Activated naive CD4-positive, alpha-beta T cell treated with anti-CD3 and anti-CD28 coated beads, Interleukin-2, amount 10 ng/mL, durations not matched to agents 7 days and 5 days (primary cell): ENCODE measurements at regions of chr14 and their contacts with region 1.

Region 1: DNA sequence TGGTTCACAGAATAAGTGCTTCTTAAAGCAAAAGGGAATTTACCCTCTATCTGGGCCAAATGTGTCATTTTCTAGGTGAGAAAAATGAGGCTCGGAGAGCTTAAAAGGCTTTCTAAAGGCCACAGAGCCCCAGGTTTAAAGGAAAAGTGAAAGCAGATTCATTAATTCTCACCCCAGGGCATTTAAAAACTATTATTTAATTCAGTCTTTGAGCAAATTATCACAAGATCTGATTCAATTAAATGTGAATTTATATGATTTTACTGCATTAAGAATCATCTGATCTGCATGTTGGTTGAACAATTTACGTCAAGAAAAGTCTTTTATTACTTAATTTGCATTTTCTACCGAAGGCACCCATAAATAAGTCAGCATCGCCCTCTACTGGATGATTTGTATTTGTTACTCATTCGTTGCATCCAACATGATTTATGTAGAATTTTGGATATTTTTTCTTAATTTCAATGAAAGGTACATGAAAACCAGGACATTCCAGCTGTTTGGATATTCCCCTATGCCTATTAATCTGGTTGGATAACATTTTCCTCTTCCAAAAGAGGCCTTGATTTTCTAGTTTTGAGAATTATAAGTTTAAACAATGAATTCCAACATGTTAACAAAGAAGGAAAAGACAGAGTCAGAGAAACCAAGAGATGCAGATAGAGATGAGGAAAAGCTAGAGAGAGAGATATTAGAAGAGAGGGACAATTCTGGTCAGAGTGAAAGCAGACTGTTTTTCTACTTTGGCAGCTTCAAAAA is 19.1 kb upstream of the DHRS7 start:
- DNase-seq: peak; percentile 37
- H3K4me3 Mint-ChIP-seq: peak overlapping the region; percentile 67
- H3K27ac Mint-ChIP-seq: peak overlapping the region; percentile 70
- H3K4me1 Mint-ChIP-seq: peaks cover 14% of the 10 kb centered on the region
- H3K27me3 Mint-ChIP-seq: no peaks in the 10 kb centered on the region

Region 2: DNA sequence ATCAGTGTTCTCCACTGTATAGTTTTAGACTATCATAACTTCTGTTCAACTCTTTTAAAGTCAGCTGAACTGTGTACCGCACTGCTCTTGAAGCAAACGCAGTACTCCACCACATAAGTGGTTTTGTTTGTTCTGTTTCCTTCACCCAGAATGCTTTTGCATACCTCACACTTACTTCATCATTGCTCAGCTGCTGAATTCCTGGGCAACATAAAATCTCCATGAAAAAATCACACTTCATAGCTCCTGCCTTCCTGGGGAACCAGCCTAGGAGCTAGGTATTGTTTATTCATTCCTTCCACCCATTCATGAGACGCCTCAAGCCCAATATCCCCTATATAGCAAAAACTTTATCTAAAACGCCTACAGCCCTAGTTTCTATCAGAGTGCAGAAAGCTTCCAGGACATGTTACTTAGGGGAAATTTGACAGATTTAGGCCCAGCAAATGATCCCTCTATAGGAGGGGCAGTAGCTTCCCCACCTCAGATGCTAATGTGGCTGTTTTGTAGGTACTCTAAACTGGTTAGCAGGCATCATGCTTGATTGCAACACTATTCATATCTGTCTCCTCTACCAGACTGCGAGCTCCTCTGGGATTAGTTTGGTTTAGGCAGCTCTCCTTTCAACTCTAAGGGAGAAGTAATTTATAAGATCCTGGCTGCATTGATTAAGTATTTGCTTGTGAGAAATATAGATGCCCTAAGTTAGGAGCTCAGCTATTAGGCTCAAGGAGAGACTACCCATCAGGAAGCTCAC is 219.9 kb before region 1 on chr14:
- CTCF ChIA-PET with region 1: interaction called, 124 read pairs
- DNase-seq: no peak
- H3K4me3 Mint-ChIP-seq: no peak overlapping the region
- H3K27ac Mint-ChIP-seq: no peak overlapping the region
- H3K4me1 Mint-ChIP-seq: peaks cover 10% of the 10 kb centered on the region
- H3K27me3 Mint-ChIP-seq: no peaks in the 10 kb centered on the region

Region 3: DNA sequence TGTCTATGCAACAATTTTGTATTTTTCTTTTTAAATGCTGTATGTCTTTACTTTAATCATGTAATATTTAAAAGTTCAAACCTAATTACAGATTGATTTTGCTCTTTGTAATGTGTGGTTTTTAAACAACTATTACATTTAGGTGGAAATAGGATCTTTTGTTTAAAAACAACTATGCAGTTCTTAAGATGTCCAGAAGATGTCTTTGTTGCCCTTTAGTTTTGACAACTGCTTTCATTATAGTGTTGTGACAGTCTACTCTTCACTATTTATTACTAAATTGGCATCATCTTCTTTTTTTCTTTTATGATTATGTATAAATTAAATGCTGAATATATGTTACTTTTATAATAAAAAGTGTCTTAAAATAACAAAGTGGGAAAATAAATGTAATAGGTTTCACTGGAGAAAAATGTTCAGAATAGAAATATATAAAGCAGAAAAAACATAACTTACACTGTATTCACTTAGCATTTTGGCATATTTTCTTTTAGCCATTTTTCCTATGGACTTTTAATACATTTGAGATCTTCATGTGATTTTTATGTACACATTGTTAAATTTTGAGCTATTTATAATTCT is 119.7 kb before region 1 on chr14:
- CTCF ChIA-PET with region 1: interaction called, 52 read pairs
- DNase-seq: no peak
- H3K4me3 Mint-ChIP-seq: no peak overlapping the region
- H3K27ac Mint-ChIP-seq: no peak overlapping the region
- H3K4me1 Mint-ChIP-seq: no peaks in the 10 kb centered on the region
- H3K27me3 Mint-ChIP-seq: no peaks in the 10 kb centered on the region

Region 4: DNA sequence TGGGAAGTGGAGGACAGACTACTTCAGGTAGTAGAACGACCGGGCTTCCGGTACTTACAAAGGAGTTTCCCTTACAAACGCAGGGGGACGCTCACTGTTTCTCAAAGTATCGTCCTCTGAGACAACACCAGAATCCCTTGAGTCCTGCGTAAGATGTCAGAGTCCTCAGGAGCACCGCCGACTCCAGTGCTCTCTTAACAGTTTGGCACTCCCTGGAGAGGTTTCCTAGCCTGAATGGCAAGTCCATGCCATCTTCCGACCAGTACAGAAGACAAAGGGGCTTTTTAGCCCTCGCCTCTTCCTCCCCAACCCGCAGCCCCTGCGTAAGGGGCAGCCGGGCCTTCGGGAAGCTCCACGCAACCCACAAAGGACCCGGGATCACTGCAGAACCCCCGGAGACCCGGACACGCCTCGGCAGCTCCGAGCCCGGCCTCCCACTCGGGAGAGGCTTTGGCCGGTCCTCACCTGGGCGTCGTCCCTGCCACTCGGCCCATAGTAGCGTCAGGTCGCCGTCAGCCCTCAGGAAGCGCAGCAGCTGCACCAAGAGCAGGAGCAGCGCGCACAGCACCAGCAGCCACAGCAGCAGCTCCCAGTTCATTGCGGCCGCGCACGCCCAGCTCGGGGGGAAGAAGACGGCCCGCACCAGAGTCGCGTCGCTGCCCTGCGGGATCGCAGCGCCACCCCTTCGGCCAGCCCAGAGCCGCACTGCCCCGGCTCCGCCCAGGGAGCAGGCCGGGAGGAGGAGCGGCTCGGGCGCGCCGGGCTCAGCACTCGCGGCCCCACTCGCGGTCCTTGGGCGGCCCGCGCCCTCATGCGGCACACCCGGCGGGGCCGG is 19.4 kb before region 1 on chr14 and contains the start of gene DHRS7:
- CTCF ChIA-PET with region 1: interaction called, 19 read pairs
- DNase-seq: peak; percentile 67
- H3K4me3 Mint-ChIP-seq: peak within 1 kb of the TSS; percentile 95
- H3K27ac Mint-ChIP-seq: peak within 1 kb of the TSS; percentile 95
- H3K4me1 Mint-ChIP-seq: peaks cover 29% of the 10 kb centered on the region
- H3K27me3 Mint-ChIP-seq: peaks cover 5% of the 10 kb centered on the region

Region 5: DNA sequence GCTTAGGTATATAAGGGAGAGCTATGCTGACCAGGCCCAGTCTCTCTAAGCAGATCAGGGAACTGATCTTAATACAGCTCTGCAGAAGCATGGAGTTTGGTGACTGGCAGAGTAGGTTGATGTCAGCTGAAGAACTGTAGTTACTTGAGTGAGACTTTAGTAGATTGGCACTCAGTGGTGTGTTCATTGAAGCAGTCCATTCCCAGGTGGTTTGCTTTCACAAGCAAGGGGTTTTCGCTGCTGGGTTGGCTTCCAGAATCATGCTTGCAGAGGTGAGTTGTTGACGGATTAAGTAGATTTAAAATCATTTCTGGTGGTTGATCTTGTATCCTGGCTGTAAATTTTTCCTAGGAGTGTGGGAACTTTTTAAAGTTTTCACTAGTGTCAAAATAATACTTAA is 12.6 kb before region 1 on chr14:
- CTCF ChIA-PET with region 1: interaction called, 13 read pairs
- DNase-seq: no peak
- H3K4me3 Mint-ChIP-seq: no peak overlapping the region
- H3K27ac Mint-ChIP-seq: no peak overlapping the region
- H3K4me1 Mint-ChIP-seq: no peaks in the 10 kb centered on the region
- H3K27me3 Mint-ChIP-seq: peaks cover 5% of the 10 kb centered on the region